HepG2 (cell line): ENCODE measurements at regions of chr4 and their contacts with region 1.

Region 1: DNA sequence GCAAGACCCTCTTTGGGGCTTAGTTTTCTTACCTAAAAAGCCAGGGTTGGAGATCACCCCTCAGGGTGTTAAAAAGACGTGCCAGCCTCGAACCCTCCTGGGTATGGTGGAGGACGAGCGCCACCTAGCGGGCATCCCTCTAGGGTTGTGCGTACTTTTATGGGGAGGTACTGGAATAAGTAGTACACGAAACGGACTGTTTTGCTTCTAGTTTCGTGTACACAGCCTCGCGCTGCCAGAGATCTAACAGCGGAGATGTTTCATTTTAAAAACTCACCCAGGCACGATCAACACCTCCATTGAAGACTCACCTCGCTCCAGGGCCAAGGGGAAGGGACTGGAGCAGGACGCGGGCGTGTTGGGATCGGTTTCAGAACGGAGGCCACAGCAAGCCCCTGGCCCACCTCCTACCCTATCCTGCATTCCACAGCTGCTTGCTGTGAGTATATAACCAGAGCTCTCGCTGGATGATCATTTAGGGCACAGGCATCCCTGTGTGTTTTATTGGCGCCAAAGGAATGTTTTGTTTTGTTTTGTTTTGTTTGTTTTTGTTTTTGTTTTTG is 4.8 kb upstream of the NKX3-2 start:
- DNase-seq: peak; percentile 65
- ATAC-seq: peak; percentile 72
- H3K4me3 ChIP-seq: peak overlapping the region; percentile 71 to 80 (median 76)
- H3K27ac ChIP-seq: no peak overlapping the region
- H3K4me1 ChIP-seq: peaks cover 28% of the 10 kb centered on the region
- H3K27me3 ChIP-seq: peaks cover 2 to 12% of the 10 kb centered on the region in 2 experiments; a peak in 4 of 5 replicates
- CTCF ChIP-seq: peak; percentile 95
- EP300 ChIP-seq: no peak
- POLR2A ChIP-seq: no peak
- RAD21 ChIP-seq: peak; percentile 90

Region 2: DNA sequence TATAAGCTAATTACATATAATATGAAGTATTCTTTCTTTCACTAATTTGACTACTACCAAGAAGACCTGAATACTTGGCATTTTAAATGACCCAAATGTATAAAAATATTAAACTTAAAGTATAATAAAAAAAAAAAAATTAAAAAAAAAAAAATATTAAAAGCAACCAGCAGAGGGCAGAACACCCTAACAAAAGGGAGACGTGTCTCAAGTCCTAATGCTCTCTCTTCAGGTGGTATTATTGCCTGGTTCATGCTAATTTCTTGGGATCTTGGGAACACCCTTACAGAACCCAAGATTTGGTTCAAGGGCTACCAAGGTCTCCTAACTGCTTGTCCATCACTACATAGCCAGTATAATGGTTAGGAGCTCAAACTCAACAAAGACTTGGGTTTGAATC is 819.7 kb before region 1 on chr4:
- CTCF ChIA-PET with region 1: interaction called, 26 read pairs
- POLR2A ChIA-PET with region 1: no interaction called
- in situ Hi-C with region 1: loop called (anchors 5 kb)
- intact Hi-C with region 1: loop called (anchors 1 kb)
- DNase-seq: peak; percentile 11
- ATAC-seq: no peak
- H3K4me3 ChIP-seq: no peak overlapping the region
- H3K27ac ChIP-seq: no peak overlapping the region
- H3K4me1 ChIP-seq: no peaks in the 10 kb centered on the region
- H3K27me3 ChIP-seq: no peaks in the 10 kb centered on the region; a peak in 2 of 5 replicates
- CTCF ChIP-seq: peak; percentile 44
- EP300 ChIP-seq: no peak
- POLR2A ChIP-seq: no peak
- RAD21 ChIP-seq: no peak

Region 3: DNA sequence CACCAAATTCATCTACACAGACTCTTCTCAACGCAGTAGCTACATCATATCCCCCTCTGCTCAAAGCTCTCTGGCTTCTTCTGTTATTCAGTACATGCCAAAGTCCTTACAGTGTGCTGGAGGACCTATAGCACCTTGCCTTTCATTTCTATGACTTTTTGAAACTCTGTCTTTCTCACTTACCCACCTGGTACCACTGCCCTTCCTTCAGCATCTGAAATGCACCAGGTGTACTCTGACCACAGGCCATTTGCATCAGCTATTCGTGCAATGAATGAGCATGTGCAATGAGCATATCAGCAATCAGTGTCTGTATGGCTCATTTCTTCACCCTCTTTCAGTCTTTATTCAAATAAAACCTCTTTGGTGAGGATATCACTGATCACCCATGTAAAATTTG is 464.9 kb before region 1 on chr4:
- CTCF ChIA-PET with region 1: no interaction called
- POLR2A ChIA-PET with region 1: no interaction called
- in situ Hi-C with region 1: no loop called
- intact Hi-C with region 1: loop called (anchors 5 kb)
- DNase-seq: no peak
- ATAC-seq: no peak
- H3K4me3 ChIP-seq: no peak overlapping the region
- H3K27ac ChIP-seq: no peak overlapping the region
- H3K4me1 ChIP-seq: no peaks in the 10 kb centered on the region
- H3K27me3 ChIP-seq: no peaks in the 10 kb centered on the region
- CTCF ChIP-seq: no peak
- EP300 ChIP-seq: no peak
- POLR2A ChIP-seq: no peak
- RAD21 ChIP-seq: no peak

Region 4: DNA sequence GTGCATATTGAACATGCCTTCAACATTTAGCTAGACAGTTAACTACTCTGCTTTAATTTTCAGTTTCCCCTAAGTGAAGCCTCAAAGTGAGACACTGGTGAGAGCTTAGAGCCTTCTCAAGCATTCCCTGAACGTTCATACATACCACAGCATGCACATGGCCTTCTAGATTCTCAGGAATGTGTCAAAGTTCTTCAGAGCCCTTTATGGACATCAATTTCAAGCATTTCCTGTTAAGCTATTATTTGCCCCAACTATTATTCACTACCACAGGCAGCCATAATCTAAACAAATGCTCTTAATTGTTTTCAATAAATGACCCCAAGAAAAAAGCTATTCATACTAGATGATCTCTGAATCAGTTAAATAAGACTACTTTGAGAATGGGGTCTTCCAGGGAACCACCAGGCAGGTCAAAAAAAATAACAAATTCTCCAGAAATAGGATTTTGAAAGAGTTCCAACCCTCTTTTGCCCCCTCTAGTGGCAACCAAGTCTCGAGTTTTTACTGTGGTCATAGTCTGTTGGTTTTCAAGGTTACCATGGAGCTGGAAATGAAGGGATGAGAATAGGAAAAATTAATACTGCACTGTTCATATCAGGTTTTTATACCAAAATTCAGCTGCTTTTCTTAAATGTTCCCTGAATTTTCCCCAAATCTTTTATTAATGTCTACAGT is 300.3 kb before region 1 on chr4:
- CTCF ChIA-PET with region 1: interaction called, 7 read pairs
- POLR2A ChIA-PET with region 1: no interaction called
- in situ Hi-C with region 1: no loop called
- intact Hi-C with region 1: loop called (anchors 2 kb)
- DNase-seq: peak; percentile 13
- ATAC-seq: peak; percentile 37; the same call in 1 of the 3 replicates
- H3K4me3 ChIP-seq: no peak overlapping the region
- H3K27ac ChIP-seq: no peak overlapping the region
- H3K4me1 ChIP-seq: peaks cover 13% of the 10 kb centered on the region; the same call in 1 of the 2 replicates
- H3K27me3 ChIP-seq: no peaks in the 10 kb centered on the region
- CTCF ChIP-seq: peak; percentile 49
- EP300 ChIP-seq: no peak
- POLR2A ChIP-seq: no peak
- RAD21 ChIP-seq: no peak